Panc1 (cell line): ENCODE measurements at regions of chr18 and their contacts with region 1.

Region 1: GRCh38 chr18:1475867-1476266 is 571.2 kb downstream of the ADCYAP1 start:
- DNase-seq: no peak
- ATAC-seq: no peak
- H3K4me3 ChIP-seq: no peak overlapping the region
- H3K27ac ChIP-seq: no peak overlapping the region
- H3K4me1 ChIP-seq: no peaks in the 10 kb centered on the region
- H3K27me3 ChIP-seq: no peaks in the 10 kb centered on the region
- CTCF ChIP-seq: no peak

Region 2: DNA sequence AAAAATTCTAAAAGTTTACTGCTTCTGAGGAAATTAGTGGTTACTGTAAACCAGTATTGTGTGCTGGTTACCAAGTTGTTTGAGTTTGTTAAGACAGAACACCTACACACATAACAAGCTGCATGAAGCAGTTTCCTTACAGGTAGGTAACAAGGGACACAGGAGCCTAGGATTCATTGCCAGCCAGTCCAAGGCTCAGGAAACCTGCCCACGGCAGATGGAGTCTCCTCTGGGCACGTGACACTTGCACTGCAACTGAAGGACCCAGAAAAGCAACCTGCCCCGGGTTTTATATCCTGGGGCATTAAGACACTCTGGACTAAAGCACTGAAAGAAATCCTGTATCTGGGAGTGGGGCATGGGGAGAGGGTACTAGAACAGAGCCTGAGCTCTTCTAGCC is 68.1 kb after region 1 on chr18:
- CTCF ChIA-PET with region 1: no interaction called
- POLR2A ChIA-PET with region 1: no interaction called
- in situ Hi-C with region 1: no loop called
- intact Hi-C with region 1: loop called (anchors 2 kb)
- DNase-seq: no peak
- ATAC-seq: no peak
- H3K4me3 ChIP-seq: no peak overlapping the region
- H3K27ac ChIP-seq: no peak overlapping the region
- H3K4me1 ChIP-seq: no peaks in the 10 kb centered on the region
- H3K27me3 ChIP-seq: no peaks in the 10 kb centered on the region
- CTCF ChIP-seq: no peak